ENCODE measurements at regions of chr4 and their contacts with region 1.

Region 1: DNA sequence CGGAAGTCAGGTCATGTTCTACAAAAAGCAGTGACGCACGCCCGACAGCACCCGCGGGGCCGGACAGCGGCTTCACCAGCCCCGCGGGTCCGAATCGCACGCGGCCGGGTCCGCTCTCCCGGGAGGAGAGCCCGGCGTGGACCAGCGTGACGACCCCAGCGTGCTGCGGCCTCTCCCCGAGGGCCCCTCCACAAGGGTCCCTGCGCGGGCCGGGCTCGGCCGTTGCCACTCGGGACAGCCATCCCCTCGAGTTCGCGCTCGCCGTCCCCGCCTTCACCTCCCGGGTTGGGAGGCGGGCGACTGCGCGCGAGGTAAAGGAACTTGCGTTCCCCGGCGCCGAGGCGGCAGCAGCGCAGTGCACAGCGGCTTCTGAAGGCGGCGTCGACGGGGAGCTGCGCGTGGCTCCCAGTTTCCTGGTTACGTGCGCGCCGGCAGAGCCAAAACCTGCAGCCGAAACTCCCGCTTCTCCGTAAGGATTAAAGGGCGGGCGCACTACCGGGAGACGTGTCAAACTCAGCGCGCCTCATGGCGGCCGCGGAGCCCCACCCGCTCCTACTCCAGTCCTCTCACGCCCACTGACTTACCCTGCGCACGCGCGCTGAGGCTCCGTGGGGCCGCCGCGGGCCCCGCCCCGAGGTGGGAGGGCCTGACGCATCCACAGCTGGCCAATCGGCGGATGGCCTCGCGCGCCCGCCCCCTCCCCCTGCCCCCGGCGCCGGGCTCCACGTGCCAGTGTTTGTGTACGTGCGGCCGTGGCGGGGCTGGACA is 416 bp upstream of the LRP2BP start:
- DNase-seq: peak; percentile 95
- H3K4me3 Mint-ChIP-seq: peak overlapping the region; percentile 93
- H3K27ac Mint-ChIP-seq: peak overlapping the region; percentile 98
- H3K4me1 Mint-ChIP-seq: peaks cover 42% of the 10 kb centered on the region
- H3K27me3 Mint-ChIP-seq: no peaks in the 10 kb centered on the region

Region 2: DNA sequence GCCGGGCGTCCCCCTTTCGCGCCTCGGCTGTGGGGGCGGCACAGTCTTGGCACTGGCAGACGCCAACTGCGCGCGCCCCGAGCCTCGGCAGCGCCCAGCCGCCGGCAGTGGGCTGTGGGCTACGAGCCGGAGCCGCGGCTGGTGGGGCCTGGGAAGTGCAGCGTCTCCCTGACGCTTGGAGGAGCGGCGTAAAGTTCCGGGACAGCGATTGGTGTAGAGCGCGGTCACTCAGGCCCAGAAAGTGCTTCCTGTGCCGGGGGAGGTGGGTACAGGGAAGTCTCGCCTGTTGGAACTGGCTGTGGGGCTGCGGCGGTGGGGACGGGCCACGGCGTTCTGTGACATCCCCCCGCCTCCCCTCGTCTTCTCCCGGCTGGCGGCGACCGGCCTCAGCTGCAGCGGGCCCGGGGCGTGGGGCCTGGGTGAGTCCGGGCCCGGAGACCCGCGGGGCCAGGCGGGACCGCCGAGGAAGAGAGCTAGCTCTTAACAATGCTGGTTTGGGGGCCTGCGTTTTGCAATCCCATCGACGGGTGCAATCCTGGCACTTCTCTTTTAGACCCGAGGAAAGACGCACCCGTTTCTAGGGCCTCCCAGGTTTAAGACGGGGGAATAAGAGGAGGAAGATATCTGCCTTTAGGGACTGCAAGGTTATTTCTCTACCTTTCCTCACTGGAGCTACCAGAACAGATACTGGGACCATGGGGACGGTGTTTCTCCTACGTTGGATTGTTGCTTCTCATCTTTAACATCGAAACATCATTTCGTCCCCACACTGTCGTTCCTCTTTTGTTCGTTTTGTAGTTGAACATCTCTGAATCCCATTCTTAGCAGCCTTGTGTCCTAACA is 1736.9 kb before region 1 on chr4 and contains the starts of genes RWDD4 and TRAPPC11:
- CTCF ChIA-PET with region 1: no interaction called
- intact Hi-C with region 1: loop called (anchors 1 kb)
- DNase-seq: peak; percentile 98
- H3K4me3 Mint-ChIP-seq: peak within 1 kb of the TSS; percentile 96
- H3K27ac Mint-ChIP-seq: peak within 1 kb of the TSS; percentile 68
- H3K4me1 Mint-ChIP-seq: peaks cover 32% of the 10 kb centered on the region
- H3K27me3 Mint-ChIP-seq: no peaks in the 10 kb centered on the region
- total RNA-seq, gene RWDD4: 17.8 to 20.8 TPM
- total RNA-seq, gene TRAPPC11: 25.0 to 32.6 TPM

Region 3: GRCh38 chr4:185142912-185143595 is 253.1 kb before region 1 on chr4 and contains the start of gene SLC25A4:
- CTCF ChIA-PET with region 1: no interaction called
- intact Hi-C with region 1: loop called (anchors 1 kb)
- DNase-seq: peak; percentile 87
- H3K4me3 Mint-ChIP-seq: peak within 1 kb of the TSS; percentile 83
- H3K27ac Mint-ChIP-seq: no peak within 1 kb of the TSS
- H3K4me1 Mint-ChIP-seq: peaks cover 13% of the 10 kb centered on the region
- H3K27me3 Mint-ChIP-seq: peaks cover 11% of the 10 kb centered on the region
- total RNA-seq, gene SLC25A4: 4.3 to 5.0 TPM

Region 4: DNA sequence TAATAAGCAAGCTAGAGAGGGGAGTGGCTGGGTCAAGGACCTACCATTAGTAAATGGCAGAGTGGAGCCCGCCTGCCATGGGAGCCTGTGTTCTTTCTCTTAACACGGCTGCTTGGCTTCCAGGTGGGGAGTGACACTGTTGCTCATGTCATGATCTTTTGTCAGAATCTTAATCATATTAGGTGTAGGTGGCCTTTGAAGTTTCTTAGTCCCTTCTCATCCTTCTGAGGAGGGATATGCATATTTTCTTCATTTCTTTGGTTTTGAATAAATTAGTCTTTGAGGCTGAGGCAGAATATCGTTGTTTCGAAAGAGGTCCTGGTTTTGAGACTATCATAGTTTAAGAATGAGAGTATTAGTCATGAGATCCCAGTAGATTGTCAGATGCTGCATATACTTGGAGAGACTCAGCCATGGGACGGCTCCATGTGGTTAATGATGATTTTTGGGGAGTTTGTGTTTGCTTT is 157.9 kb before region 1 on chr4:
- CTCF ChIA-PET with region 1: no interaction called
- intact Hi-C with region 1: loop called (anchors 1 kb)
- DNase-seq: peak; percentile 69
- H3K4me3 Mint-ChIP-seq: peak overlapping the region; percentile 51
- H3K27ac Mint-ChIP-seq: peak overlapping the region; percentile 83
- H3K4me1 Mint-ChIP-seq: peaks cover 34% of the 10 kb centered on the region
- H3K27me3 Mint-ChIP-seq: no peaks in the 10 kb centered on the region

Region 5: DNA sequence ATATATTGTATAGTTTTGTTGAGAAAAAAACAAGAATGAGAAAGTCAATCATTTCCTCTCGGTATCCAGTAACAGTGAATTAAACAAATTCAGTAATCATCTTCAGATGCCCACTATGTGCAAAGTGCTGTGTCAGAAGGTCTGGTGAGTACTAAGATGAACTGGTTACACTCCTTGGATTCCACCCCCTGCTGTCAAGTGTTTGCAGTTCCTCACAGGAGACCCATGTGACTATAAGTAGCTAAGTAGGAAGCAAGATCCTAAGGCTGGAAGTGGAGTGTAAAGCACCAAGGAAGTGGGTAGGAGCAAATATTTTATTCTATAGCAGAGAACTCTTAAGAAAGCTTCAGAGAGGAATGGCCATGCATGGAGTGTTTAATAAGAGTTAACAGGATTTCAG is 113.2 kb before region 1 on chr4:
- CTCF ChIA-PET with region 1: no interaction called
- intact Hi-C with region 1: no loop called
- DNase-seq: no peak
- H3K4me3 Mint-ChIP-seq: no peak overlapping the region
- H3K27ac Mint-ChIP-seq: no peak overlapping the region
- H3K4me1 Mint-ChIP-seq: no peaks in the 10 kb centered on the region
- H3K27me3 Mint-ChIP-seq: no peaks in the 10 kb centered on the region

Region 6: DNA sequence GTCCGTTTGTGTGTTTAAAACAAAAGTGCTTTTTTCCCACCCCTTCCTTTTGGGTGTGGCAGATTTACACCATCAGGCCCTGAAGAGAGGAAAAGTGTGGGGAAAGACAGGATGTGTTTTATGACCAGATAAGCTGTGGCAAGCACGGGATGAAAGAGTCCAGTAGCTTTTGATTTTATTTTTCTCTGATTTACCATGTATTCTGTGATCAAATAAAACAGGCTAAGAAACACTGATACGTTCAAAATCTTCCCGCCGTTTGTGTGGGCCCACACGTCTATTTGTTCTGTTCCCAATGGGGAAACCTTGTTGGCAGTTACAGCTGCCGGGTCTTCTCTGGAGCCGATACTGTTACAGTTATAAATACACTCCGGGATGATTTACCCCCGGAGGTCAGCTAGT is 11.2 kb before region 1 on chr4:
- CTCF ChIA-PET with region 1: no interaction called
- intact Hi-C with region 1: no loop called
- DNase-seq: no peak
- H3K4me3 Mint-ChIP-seq: no peak overlapping the region
- H3K27ac Mint-ChIP-seq: no peak overlapping the region
- H3K4me1 Mint-ChIP-seq: peaks cover 11% of the 10 kb centered on the region
- H3K27me3 Mint-ChIP-seq: peaks cover 24% of the 10 kb centered on the region

Region 7: GRCh38 chr4:185425647-185426352 is 29.7 kb after region 1 on chr4 and contains the start of gene UFSP2:
- CTCF ChIA-PET with region 1: interaction called, 4 read pairs
- intact Hi-C with region 1: loop called (anchors 1 kb)
- DNase-seq: peak; percentile 86
- H3K4me3 Mint-ChIP-seq: peak within 1 kb of the TSS; percentile 76
- H3K27ac Mint-ChIP-seq: peak within 1 kb of the TSS; percentile 96
- H3K4me1 Mint-ChIP-seq: peaks cover 28% of the 10 kb centered on the region
- H3K27me3 Mint-ChIP-seq: peaks cover 1% of the 10 kb centered on the region
- total RNA-seq, gene UFSP2: 24.4 to 30.7 TPM

Region 8: GRCh38 chr4:185597532-185598188 is 201.5 kb after region 1 on chr4:
- CTCF ChIA-PET with region 1: no interaction called
- intact Hi-C with region 1: loop called (anchors 1 kb)
- DNase-seq: peak; percentile 84
- H3K4me3 Mint-ChIP-seq: no peak overlapping the region
- H3K27ac Mint-ChIP-seq: no peak overlapping the region
- H3K4me1 Mint-ChIP-seq: no peaks in the 10 kb centered on the region
- H3K27me3 Mint-ChIP-seq: peaks cover 13% of the 10 kb centered on the region